Lower leg skin (tissue), 4 donors: ENCODE measurements at regions of chr4 and their contacts with region 1.

Region 1: GRCh38 chr4:42282081-42282901 is 115.0 kb upstream of the SHISA3 start:
- DNase-seq: peak in 1 of 2 donors; percentile 19
- H3K4me3 ChIP-seq: no peak overlapping the region
- CTCF ChIP-seq: no peak
- POLR2A ChIP-seq: no peak

Region 2: GRCh38 chr4:42262701-42263490 is 19.4 kb before region 1 on chr4:
- intact Hi-C with region 1: no loop called
- DNase-seq: no peak
- H3K4me3 ChIP-seq: no peak overlapping the region
- CTCF ChIP-seq: no peak
- POLR2A ChIP-seq: no peak

Region 3: GRCh38 chr4:42331914-42332368 is 49.6 kb after region 1 on chr4:
- intact Hi-C with region 1: no loop called
- DNase-seq: peak in 1 of 2 donors; percentile 21
- H3K4me3 ChIP-seq: no peak overlapping the region
- CTCF ChIP-seq: no peak
- POLR2A ChIP-seq: no peak

Region 4: GRCh38 chr4:42519803-42520417 is 237.6 kb after region 1 on chr4:
- intact Hi-C with region 1: loop called (anchors 10 kb)
- DNase-seq: peak in 1 of 2 donors; percentile 43
- H3K4me3 ChIP-seq: no peak overlapping the region
- CTCF ChIP-seq: no peak
- POLR2A ChIP-seq: no peak

Region 5: DNA sequence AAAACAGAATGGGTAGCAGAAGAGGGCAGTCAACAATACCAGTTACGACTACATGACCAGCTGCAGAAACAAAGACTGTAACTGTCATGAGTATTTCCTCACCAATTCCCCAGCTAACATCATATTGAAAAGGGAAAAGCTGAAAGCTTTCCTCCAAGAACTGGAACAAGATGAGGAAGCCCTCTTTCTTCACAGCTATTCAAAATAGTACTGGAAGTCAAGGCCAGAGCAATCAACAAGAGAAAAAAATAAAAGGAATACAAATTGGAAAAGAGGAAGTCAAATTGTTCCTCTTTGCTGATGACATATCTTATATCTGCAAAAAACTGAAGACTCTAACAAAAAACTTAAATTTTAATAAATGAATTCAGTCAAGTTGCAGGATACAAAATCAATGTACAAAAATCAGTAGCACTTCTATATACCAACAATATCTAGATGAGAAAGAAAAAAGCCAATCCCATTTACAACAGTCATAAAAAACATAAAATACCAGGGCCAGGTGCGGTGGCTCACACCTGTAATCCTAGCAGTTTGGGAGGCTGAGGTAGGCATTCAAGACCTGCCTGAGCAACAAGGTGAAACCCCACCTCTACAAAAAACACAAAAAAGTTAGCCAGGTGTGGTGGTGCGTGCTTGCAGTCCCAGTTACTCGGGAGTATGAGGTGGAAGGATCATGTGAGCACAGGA is 249.2 kb after region 1 on chr4:
- intact Hi-C with region 1: no loop called
- DNase-seq: no peak
- H3K4me3 ChIP-seq: no peak overlapping the region
- CTCF ChIP-seq: no peak
- POLR2A ChIP-seq: no peak